OCI-LY7 (cell line): ENCODE measurements at regions of chr3 and their contacts with region 1.

Region 1: GRCh38 chr3:72496051-72496670 is 352.1 kb downstream of the SHQ1 start:
- DNase-seq: peak; percentile 44
- H3K4me3 ChIP-seq: no peak overlapping the region
- H3K27ac ChIP-seq: no peak overlapping the region
- H3K4me1 ChIP-seq: no peaks in the 10 kb centered on the region
- CTCF ChIP-seq: no peak

Region 2: DNA sequence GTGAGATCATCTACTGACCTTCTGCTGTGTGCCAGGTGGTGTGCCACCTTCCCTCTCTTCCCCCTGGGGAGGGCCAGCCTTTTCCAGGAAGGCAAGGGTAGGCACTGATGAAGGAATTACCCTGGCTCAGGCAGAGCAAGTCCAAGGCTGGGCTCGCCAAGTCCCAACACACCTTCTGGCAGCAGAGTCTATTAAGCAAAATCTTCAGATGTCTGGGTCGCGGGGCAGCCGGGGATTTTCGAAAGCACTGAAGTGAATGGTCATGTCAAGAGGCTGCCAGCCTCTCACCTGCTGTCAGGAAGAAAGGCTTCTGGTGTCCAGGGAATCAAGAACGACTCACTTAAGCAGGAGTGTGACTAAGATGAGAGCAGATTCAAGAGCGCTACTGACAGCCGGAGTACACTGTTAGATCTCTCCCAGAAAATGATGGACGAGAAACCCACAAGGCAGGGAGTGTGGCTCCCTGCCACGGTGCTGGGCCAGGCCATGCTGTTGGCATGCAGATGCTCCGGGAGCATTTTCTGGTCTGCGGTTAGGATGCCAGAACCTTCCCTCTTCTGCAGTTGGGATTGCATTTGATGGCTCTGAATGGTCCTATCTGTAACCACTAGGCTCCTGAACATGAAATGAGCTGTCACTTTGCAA is 127.7 kb before region 1 on chr3:
- CTCF ChIA-PET with region 1: no interaction called
- POLR2A ChIA-PET with region 1: no interaction called
- intact Hi-C with region 1: no loop called
- DNase-seq: no peak
- H3K4me3 ChIP-seq: no peak overlapping the region
- H3K27ac ChIP-seq: no peak overlapping the region
- H3K4me1 ChIP-seq: no peaks in the 10 kb centered on the region
- CTCF ChIP-seq: no peak

Region 3: GRCh38 chr3:72549761-72550581 is 53.8 kb after region 1 on chr3:
- CTCF ChIA-PET with region 1: no interaction called
- POLR2A ChIA-PET with region 1: interaction called, 12 read pairs
- intact Hi-C with region 1: no loop called
- DNase-seq: no peak
- H3K4me3 ChIP-seq: no peak overlapping the region
- H3K27ac ChIP-seq: no peak overlapping the region
- H3K4me1 ChIP-seq: no peaks in the 10 kb centered on the region
- CTCF ChIP-seq: no peak